Heart left ventricle (tissue), 16 donors: ENCODE measurements at regions of chr17 and their contacts with region 1.

Region 1: GRCh38 chr17:39754161-39754951 is 16.6 kb downstream of the GRB7 start:
- DNase-seq: peak; percentile 92 to 98 (median 95)
- ATAC-seq: peak; percentile 88 to 95 (median 94)
- H3K4me3 ChIP-seq: peak overlapping the region; percentile 29 to 89 (median 71)
- H3K27ac ChIP-seq: peak overlapping the region; percentile 75 to 98 (median 93)
- H3K4me1 ChIP-seq: peaks cover 0 to 43% (median 25%) of the 10 kb centered on the region in 12 donors
- H3K27me3 ChIP-seq: no peaks in the 10 kb centered on the region
- CTCF ChIP-seq: peak; percentile 84 to 99 (median 96)
- POLR2A ChIP-seq: peak in 1 of 2 donors; percentile 67

Region 2: DNA sequence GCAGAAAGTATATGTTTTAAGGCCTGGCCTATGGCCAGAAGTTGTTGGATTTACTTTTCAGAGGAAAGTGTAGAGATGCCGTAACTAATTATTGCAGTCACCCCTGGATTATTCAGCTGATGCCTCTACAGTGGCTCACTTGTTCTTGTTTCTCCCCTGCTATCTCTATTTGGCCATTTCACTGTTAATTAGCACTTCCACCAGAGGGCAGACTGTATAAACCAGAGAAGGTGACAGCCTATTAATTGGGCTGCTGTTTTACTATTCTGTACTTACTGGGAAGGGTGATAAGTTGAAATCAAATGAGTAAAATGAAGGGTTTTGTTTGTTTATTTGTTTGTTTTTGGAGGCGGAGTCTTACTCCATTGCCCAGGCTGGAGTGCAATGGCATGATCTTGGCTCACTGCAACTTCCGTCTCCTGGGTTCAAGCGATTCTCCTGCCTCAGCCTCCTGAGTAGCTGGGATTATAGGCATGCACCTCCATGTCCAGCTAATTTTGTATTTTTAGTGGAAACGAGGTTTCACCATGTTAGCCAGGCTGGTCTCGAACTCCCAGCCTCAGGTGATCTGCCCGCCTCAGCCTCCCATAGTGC is 227.0 kb before region 1 on chr17:
- intact Hi-C with region 1: no loop called
- DNase-seq: no peak
- ATAC-seq: peak in 2 of 4 donors; percentile 36 to 49
- H3K4me3 ChIP-seq: no peak overlapping the region
- H3K27ac ChIP-seq: no peak overlapping the region
- H3K4me1 ChIP-seq: peaks cover 0 to 14% (median under 1%) of the 10 kb centered on the region in 12 donors
- H3K27me3 ChIP-seq: no peaks in the 10 kb centered on the region
- CTCF ChIP-seq: peak; percentile 19 to 58 (median 40)
- POLR2A ChIP-seq: no peak

Region 3: GRCh38 chr17:39547713-39548478 is 206.5 kb before region 1 on chr17:
- intact Hi-C with region 1: loop called in 6 of 10 experiments (anchors 1 to 10 kb)
- DNase-seq: peak; percentile 34 to 82 (median 53)
- ATAC-seq: peak; percentile 50 to 81 (median 71)
- H3K4me3 ChIP-seq: no peak overlapping the region
- H3K27ac ChIP-seq: no peak overlapping the region
- H3K4me1 ChIP-seq: peaks cover 0 to 27% (median 10%) of the 10 kb centered on the region in 12 donors
- H3K27me3 ChIP-seq: no peaks in the 10 kb centered on the region
- CTCF ChIP-seq: peak; percentile 84 to 96 (median 93)
- POLR2A ChIP-seq: no peak

Region 4: DNA sequence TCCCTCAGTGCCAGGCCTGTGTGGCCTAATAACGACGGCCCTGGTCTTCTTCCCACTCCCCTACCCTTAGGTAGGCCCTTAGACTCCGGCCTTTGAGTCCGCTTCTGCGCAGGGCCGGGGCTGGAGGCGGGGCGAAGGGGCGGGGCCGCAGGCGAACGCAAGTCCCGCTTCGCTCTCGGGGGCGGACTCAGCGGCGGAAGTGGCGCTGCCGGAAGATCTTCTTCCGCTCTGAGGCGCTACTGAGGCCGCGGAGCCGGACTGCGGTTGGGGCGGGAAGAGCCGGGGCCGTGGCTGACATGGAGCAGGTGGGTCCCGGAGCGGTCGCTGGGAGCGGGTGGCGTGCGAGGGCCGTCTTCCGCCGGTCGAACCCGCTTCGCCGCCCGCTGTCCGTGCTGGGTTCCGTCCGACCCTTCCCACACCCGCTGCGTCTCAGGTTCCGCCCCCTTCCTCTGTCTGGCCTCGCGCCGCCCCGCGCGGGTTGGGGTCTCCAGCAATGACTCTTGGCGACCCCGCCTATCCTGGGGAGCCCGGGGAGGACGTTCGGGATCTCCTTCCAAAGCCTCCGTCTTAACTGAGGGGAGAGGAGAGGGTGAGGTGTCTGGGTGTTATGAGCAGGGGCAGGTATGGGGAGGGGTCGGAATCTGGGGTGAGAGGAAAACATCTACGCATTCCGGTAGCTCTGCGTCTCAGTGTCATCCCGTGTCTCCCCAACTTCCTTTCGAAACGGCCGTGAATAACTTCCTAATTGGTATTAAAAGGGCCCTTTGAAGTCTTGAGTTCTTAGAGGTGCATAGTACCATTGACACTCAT is 117.2 kb before region 1 on chr17 and contains the start of gene STARD3:
- intact Hi-C with region 1: loop called in 5 of 10 experiments (anchors 5 kb)
- DNase-seq: peak; percentile 94 to 97 (median 95)
- ATAC-seq: peak; percentile 90 to 97 (median 96)
- H3K4me3 ChIP-seq: peak within 1 kb of the TSS; percentile 56 to 95 (median 82)
- H3K27ac ChIP-seq: peak within 1 kb of the TSS; percentile 74 to 96 (median 92)
- H3K4me1 ChIP-seq: peaks cover 10 to 62% (median 48%) of the 10 kb centered on the region in 12 donors
- H3K27me3 ChIP-seq: no peaks in the 10 kb centered on the region
- CTCF ChIP-seq: peak in 7 of 12 donors; percentile 15 to 52 (median 32)
- POLR2A ChIP-seq: peak in 1 of 2 donors; percentile 77
- total RNA-seq, gene STARD3: 14.1 to 36.5 (median 19.3) TPM

Region 5: GRCh38 chr17:39668199-39668966 is 86.0 kb before region 1 on chr17 and contains the start of gene PNMT:
- intact Hi-C with region 1: loop called in 1 of 10 experiments (anchors 5 kb)
- DNase-seq: peak; percentile 78 to 88 (median 83)
- ATAC-seq: peak in 1 of 4 donors; percentile 8
- H3K4me3 ChIP-seq: peak within 1 kb of the TSS; percentile 36 to 78 (median 64)
- H3K27ac ChIP-seq: peak within 1 kb of the TSS; percentile 85 to 99 (median 96)
- H3K4me1 ChIP-seq: peaks cover 0 to 83% (median 34%) of the 10 kb centered on the region in 12 donors
- H3K27me3 ChIP-seq: peaks cover 0 to 40% (median 11%) of the 10 kb centered on the region in 9 donors
- CTCF ChIP-seq: peak; percentile 52 to 78 (median 64)
- POLR2A ChIP-seq: no peak
- total RNA-seq, gene PNMT: 2.4 to 7.9 (median 6.0) TPM

Region 6: GRCh38 chr17:39687811-39688518 is 66.4 kb before region 1 on chr17 and contains the start of gene PGAP3:
- intact Hi-C with region 1: loop called in 1 of 10 experiments (anchors 5 kb)
- DNase-seq: peak; percentile 89 to 92 (median 90)
- ATAC-seq: peak; percentile 86 to 97 (median 96)
- H3K4me3 ChIP-seq: peak within 1 kb of the TSS; percentile 31 to 95 (median 75)
- H3K27ac ChIP-seq: peak within 1 kb of the TSS; percentile 81 to 99 (median 90)
- H3K4me1 ChIP-seq: peaks cover 0 to 18% (median 12%) of the 10 kb centered on the region in 12 donors
- H3K27me3 ChIP-seq: no peaks in the 10 kb centered on the region
- CTCF ChIP-seq: peak in 1 of 12 donors; percentile 20
- POLR2A ChIP-seq: peak in 1 of 2 donors; percentile 67
- total RNA-seq, gene PGAP3: 8.0 to 18.8 (median 13.1) TPM

Region 7: GRCh38 chr17:39730095-39730921 is 24.0 kb before region 1 on chr17 and contains the start of gene MIEN1:
- intact Hi-C with region 1: loop called in 1 of 10 experiments (anchors 2 kb)
- DNase-seq: peak; percentile 90 to 98 (median 94)
- ATAC-seq: peak; percentile 87 to 97 (median 96)
- H3K4me3 ChIP-seq: peak within 1 kb of the TSS; percentile 56 to 99 (median 81)
- H3K27ac ChIP-seq: peak within 1 kb of the TSS; percentile 48 to 97 (median 90)
- H3K4me1 ChIP-seq: peaks cover 0 to 19% (median 8%) of the 10 kb centered on the region in 12 donors
- H3K27me3 ChIP-seq: peaks cover 0 to 2% (median 0%) of the 10 kb centered on the region in 9 donors
- CTCF ChIP-seq: peak; percentile 88 to 98 (median 92)
- POLR2A ChIP-seq: peak; percentile 6 to 87
- total RNA-seq, gene MIEN1: 34.3 to 98.1 (median 53.3) TPM

Region 8: DNA sequence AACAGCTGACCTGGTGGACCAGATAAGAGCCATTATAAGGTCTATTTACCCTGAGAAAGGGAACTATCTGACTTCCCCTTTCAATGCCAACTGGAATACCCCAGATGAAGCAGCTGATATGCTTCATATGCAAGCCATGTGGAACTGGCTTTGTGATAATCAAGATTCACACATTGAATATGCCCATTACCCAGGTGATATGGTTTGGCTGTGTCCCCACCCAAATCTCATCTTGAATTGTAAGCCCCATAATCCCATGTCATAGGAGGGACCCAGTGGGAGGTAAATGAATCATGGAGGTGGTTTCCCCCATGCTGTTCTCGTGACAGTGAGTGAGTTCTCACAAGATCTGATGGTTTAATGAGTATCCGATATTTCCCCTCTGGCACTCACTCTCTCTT is 67.7 kb after region 1 on chr17:
- intact Hi-C with region 1: no loop called
- DNase-seq: no peak
- ATAC-seq: no peak
- H3K4me3 ChIP-seq: no peak overlapping the region
- H3K27ac ChIP-seq: peak overlapping the region in 1 of 12 donors; percentile 32
- H3K4me1 ChIP-seq: peaks cover 0 to 34% (median 0%) of the 10 kb centered on the region in 12 donors
- H3K27me3 ChIP-seq: peaks cover 0 to 17% (median 0%) of the 10 kb centered on the region in 9 donors
- CTCF ChIP-seq: no peak
- POLR2A ChIP-seq: no peak

Region 9: GRCh38 chr17:39845052-39845846 is 90.9 kb after region 1 on chr17:
- intact Hi-C with region 1: no loop called
- DNase-seq: no peak
- ATAC-seq: no peak
- H3K4me3 ChIP-seq: no peak overlapping the region
- H3K27ac ChIP-seq: no peak overlapping the region
- H3K4me1 ChIP-seq: peaks cover 0 to 4% (median 0%) of the 10 kb centered on the region in 12 donors
- H3K27me3 ChIP-seq: peaks cover 0 to 38% (median 4%) of the 10 kb centered on the region in 9 donors
- CTCF ChIP-seq: no peak
- POLR2A ChIP-seq: no peak

Region 10: GRCh38 chr17:39980351-39981206 is 226.2 kb after region 1 on chr17 and contains the start of gene PSMD3:
- intact Hi-C with region 1: loop called in 2 of 10 experiments (anchors 10 kb)
- DNase-seq: peak; percentile 98
- ATAC-seq: peak; percentile 96 to 99 (median 98)
- H3K4me3 ChIP-seq: peak within 1 kb of the TSS; percentile 74 to 100 (median 95)
- H3K27ac ChIP-seq: peak within 1 kb of the TSS; percentile 70 to 99 (median 92)
- H3K4me1 ChIP-seq: peaks cover 7 to 34% (median 23%) of the 10 kb centered on the region in 12 donors
- H3K27me3 ChIP-seq: peaks cover 0 to 3% (median 0%) of the 10 kb centered on the region in 9 donors
- CTCF ChIP-seq: peak; percentile 66 to 94 (median 80)
- POLR2A ChIP-seq: peak; percentile 15 to 86
- total RNA-seq, gene PSMD3: 68.9 to 117 (median 83.3) TPM